Activated naive CD4-positive, alpha-beta T cell treated with anti-CD3 and anti-CD28 coated beads for 36 hours (primary cell): ENCODE measurements at regions of chr1 and their contacts with region 1.

Region 1: DNA sequence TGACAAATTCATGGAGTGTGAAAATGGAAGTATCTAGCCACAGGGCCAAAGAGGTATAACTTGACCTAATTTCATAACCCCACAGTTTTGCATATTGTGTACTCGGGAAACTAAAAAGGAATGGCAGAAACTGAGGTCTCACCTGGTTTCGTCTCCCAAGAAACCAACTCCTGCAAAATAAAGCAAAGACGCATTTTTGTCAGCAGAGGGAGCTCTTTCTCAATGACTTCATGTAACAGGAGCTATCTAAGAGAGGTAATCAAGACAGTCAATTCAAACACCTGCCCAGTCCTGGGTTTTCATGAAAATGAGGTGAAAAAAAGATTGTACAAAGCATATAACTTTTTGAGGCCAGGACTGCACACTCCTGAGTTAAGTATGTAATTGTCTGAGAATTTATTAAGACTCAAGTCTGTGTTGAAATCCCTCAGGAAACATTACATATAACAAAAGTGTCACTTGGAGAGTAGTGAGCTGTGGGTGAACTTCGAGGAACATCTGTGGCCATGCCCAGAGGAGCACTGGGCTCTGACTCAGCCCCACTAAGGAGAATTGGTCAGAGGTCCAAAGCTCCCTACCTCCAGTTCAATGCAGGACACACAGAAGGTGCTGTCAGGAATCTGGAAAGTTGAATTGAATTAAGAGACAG is 17.6 kb downstream of the FCRL4 start:
- DNase-seq: peak; percentile 33
- H3K4me3 Mint-ChIP-seq: no peak overlapping the region
- H3K27ac Mint-ChIP-seq: no peak overlapping the region
- H3K4me1 Mint-ChIP-seq: no peaks in the 10 kb centered on the region
- H3K27me3 Mint-ChIP-seq: peaks cover 2% of the 10 kb centered on the region

Region 2: GRCh38 chr1:157626099-157626498 is 45.8 kb after region 1 on chr1:
- CTCF ChIA-PET with region 1: interaction called, 8 read pairs
- intact Hi-C with region 1: loop called (anchors 5 kb)
- DNase-seq: peak; percentile 51
- H3K4me3 Mint-ChIP-seq: no peak overlapping the region
- H3K27ac Mint-ChIP-seq: no peak overlapping the region
- H3K4me1 Mint-ChIP-seq: no peaks in the 10 kb centered on the region
- H3K27me3 Mint-ChIP-seq: peaks cover 16% of the 10 kb centered on the region

Region 3: DNA sequence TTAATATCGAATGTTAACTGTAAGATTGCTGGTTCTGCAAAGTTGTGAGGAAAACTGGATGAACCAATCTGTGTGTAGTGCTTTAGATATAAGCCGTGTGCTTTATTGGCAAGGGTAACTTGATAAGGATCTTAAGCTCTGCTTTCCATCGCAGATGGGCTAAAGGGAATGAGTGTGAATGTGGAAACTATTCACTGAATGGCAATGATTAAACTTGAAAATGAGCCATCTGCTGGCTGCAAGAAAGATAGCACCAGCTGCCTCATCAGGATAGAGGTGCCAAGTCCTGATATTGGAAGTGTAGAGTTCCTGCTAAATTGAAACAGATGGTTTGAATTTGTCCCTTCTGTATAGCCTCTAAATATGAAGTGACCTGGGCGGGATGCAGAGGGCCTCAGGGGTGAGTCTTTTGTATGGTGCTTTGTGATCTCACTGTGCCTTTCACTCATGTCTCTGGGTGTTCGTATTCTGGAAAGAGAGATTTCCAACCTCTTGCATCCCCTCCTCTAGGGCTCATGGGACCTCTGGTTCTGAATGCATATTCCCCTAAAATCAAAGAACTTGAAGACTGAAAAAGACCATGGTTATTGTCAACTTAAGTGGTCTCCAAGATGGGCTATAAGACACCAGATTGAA is 111.1 kb after region 1 on chr1:
- CTCF ChIA-PET with region 1: interaction called, 23 read pairs
- intact Hi-C with region 1: loop called (anchors 2 kb)
- DNase-seq: no peak
- H3K4me3 Mint-ChIP-seq: no peak overlapping the region
- H3K27ac Mint-ChIP-seq: no peak overlapping the region
- H3K4me1 Mint-ChIP-seq: no peaks in the 10 kb centered on the region
- H3K27me3 Mint-ChIP-seq: no peaks in the 10 kb centered on the region

Region 4: GRCh38 chr1:157773493-157774350 is 193.4 kb after region 1 on chr1:
- CTCF ChIA-PET with region 1: interaction called, 3 read pairs
- intact Hi-C with region 1: loop called (anchors 5 kb)
- DNase-seq: no peak
- H3K4me3 Mint-ChIP-seq: no peak overlapping the region
- H3K27ac Mint-ChIP-seq: no peak overlapping the region
- H3K4me1 Mint-ChIP-seq: no peaks in the 10 kb centered on the region
- H3K27me3 Mint-ChIP-seq: peaks cover 3% of the 10 kb centered on the region

Region 5: DNA sequence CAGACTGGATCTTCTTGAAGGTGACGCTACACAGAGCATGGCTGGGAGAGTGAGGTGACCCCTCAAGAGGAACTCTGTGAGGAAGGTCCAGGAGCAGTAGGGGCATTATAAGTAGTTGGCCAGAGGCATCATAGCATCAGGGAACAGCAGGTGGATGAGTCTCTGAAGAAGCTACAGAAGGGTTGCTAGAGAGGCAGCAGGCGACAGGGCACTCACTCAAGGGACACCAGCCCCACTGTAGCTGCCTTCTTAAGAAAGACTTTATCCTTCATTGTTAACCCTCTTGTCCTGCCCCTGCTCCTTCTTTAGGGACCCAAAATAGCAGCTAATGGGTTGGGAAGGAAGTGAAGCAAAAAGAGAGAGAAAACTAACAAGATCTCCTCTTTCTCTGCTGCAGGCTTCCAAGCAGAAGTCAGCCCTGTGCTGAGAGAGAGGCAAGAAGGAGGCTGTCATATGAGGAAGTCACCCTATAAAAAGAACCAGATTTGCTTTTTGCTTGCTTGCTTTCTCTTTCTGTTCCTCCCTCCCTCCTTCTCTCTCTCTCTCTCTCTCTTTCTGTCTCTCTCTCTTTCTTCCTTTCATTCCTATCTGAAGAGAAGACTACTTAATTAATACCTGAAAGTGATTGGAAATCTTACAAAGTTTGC is 269.0 kb after region 1 on chr1:
- CTCF ChIA-PET with region 1: no interaction called
- intact Hi-C with region 1: no loop called
- DNase-seq: no peak
- H3K4me3 Mint-ChIP-seq: no peak overlapping the region
- H3K27ac Mint-ChIP-seq: no peak overlapping the region
- H3K4me1 Mint-ChIP-seq: no peaks in the 10 kb centered on the region
- H3K27me3 Mint-ChIP-seq: peaks cover 11% of the 10 kb centered on the region

Region 6: GRCh38 chr1:157948312-157949073 is 368.2 kb after region 1 on chr1:
- CTCF ChIA-PET with region 1: interaction called, 3 read pairs
- intact Hi-C with region 1: loop called (anchors 2 kb)
- DNase-seq: peak; percentile 26
- H3K4me3 Mint-ChIP-seq: no peak overlapping the region
- H3K27ac Mint-ChIP-seq: no peak overlapping the region
- H3K4me1 Mint-ChIP-seq: no peaks in the 10 kb centered on the region
- H3K27me3 Mint-ChIP-seq: peaks cover 9% of the 10 kb centered on the region